ENCODE measurements at regions of chr5 and their contacts with region 1.

Region 1: GRCh38 chr5:136141561-136141960 is 8.9 kb downstream of the SMAD5 start:
- DNase-seq: no peak
- H3K4me3 Mint-ChIP-seq: no peak overlapping the region
- H3K27ac Mint-ChIP-seq: no peak overlapping the region
- H3K4me1 Mint-ChIP-seq: peaks cover 20% of the 10 kb centered on the region
- H3K27me3 Mint-ChIP-seq: peaks cover 10% of the 10 kb centered on the region

Region 2: DNA sequence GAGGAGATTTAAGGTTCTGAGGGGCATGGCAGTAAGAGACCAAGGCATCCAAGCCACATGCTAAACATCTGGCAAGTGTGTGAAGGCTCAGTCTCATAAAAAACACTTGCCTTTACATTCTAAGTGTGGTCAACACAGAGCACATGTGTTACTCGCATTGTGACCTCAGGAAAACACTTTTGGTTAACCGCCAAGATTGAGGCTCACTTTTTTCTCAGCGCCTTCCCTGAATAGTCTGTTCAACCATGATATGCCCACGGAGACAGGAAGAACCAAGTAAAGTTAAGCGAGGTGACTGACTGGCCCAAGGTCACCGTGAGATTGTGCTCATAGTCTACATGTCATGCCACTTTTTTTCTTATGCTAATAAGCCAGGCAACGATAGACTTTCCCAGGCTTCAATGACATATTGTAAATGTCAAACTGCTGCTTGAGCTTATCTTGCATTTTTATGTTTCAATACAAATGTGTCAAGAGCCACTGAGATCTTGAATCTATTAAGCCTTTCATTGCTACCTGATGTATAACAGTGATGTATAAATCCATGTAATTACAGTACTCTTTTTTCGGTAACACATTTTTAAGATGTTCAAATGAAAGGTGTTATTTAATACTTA is 224.8 kb before region 1 on chr5:
- CTCF ChIA-PET with region 1: no interaction called
- POLR2A ChIA-PET with region 1: no interaction called
- intact Hi-C with region 1: loop called (anchors 1 kb)
- DNase-seq: peak; percentile 22
- H3K4me3 Mint-ChIP-seq: no peak overlapping the region
- H3K27ac Mint-ChIP-seq: no peak overlapping the region
- H3K4me1 Mint-ChIP-seq: peaks cover 23% of the 10 kb centered on the region
- H3K27me3 Mint-ChIP-seq: peaks cover 30% of the 10 kb centered on the region

Region 3: DNA sequence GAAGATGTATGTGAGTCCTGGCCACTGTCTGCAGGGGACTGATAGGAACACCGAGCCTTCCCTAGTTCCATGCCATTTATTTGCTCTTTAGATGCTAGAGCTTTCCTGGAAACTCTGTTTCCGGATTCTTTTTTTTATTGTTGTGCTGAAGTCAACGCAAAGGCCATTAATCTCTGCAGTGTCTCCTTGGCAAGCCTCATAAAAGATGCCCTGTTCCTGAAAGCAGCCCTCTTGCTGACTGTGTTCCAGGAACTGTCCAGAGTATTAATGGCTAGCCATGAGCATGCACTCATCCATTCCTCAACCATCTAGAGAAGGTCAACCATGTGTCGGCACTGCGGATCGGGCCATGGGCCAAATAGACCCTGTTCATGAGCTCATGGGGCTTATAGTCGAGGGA is 51.8 kb before region 1 on chr5:
- CTCF ChIA-PET with region 1: no interaction called
- POLR2A ChIA-PET with region 1: no interaction called
- intact Hi-C with region 1: no loop called
- DNase-seq: no peak
- H3K4me3 Mint-ChIP-seq: no peak overlapping the region
- H3K27ac Mint-ChIP-seq: no peak overlapping the region
- H3K4me1 Mint-ChIP-seq: no peaks in the 10 kb centered on the region
- H3K27me3 Mint-ChIP-seq: peaks cover 2% of the 10 kb centered on the region

Region 4: GRCh38 chr5:136269973-136270372 is 128.4 kb after region 1 on chr5:
- CTCF ChIA-PET with region 1: no interaction called
- POLR2A ChIA-PET with region 1: no interaction called
- intact Hi-C with region 1: no loop called
- DNase-seq: no peak
- H3K4me3 Mint-ChIP-seq: no peak overlapping the region
- H3K27ac Mint-ChIP-seq: no peak overlapping the region
- H3K4me1 Mint-ChIP-seq: no peaks in the 10 kb centered on the region
- H3K27me3 Mint-ChIP-seq: peaks cover 2% of the 10 kb centered on the region

Measured in activated CD4-positive, alpha-beta memory T cell treated with anti-CD3 and anti-CD28 coated beads for 36 hours (primary cell).